ENCODE measurements at regions of chr1 and their contacts with region 1.

Region 1: GRCh38 chr1:119367427-119368124 is 1.0 kb upstream of the HAO2 start:
- DNase-seq: no peak
- H3K4me3 ChIP-seq: no peak overlapping the region
- H3K4me3 Mint-ChIP-seq: no peak overlapping the region
- H3K27ac ChIP-seq: no peak overlapping the region
- H3K27ac Mint-ChIP-seq: no peak overlapping the region
- H3K4me1 ChIP-seq: no peaks in the 10 kb centered on the region
- H3K4me1 Mint-ChIP-seq: no peaks in the 10 kb centered on the region
- H3K27me3 ChIP-seq: no peaks in the 10 kb centered on the region
- H3K27me3 Mint-ChIP-seq: peaks cover 10 to 15% of the 10 kb centered on the region in 2 donors

Region 2: GRCh38 chr1:118151312-118151937 is 1216.2 kb before region 1 on chr1:
- CTCF ChIA-PET with region 1: no interaction called
- POLR2A ChIA-PET with region 1: no interaction called
- intact Hi-C with region 1: loop called (anchors 2 kb)
- DNase-seq: peak in 1 of 5 donors; percentile 1
- H3K4me3 ChIP-seq: no peak overlapping the region
- H3K4me3 Mint-ChIP-seq: no peak overlapping the region
- H3K27ac ChIP-seq: no peak overlapping the region
- H3K27ac Mint-ChIP-seq: no peak overlapping the region
- H3K4me1 ChIP-seq: no peaks in the 10 kb centered on the region
- H3K4me1 Mint-ChIP-seq: no peaks in the 10 kb centered on the region
- H3K27me3 ChIP-seq: no peaks in the 10 kb centered on the region
- H3K27me3 Mint-ChIP-seq: no peaks in the 10 kb centered on the region

Region 3: DNA sequence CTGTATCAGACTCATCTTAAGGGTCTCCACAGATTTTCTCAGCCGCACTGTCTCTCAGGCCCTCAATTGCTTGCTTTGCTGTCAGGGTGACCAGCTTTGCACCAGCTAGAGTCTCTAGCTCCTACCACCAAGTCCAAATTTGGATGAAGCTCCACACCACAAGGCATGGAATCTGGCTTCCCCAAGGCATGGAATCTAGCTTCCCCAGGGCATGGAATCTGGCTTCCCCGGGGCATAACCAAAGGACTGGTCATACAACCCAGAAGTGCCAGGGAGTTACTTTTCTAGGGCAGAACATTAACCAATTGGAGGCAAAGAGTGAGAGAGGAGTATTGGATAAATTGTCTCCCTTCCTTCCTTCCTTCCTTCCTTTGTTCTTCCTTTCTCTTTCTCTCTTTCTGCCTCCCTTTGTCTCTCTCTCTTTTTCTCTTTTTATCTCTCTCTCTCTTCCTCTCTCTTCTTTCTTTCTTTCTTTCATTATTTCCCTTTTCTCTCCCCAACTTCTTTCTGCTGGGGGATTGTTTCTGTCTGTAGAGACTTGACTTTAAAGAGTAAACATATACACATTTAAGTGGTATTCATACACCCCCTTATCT is 75.9 kb before region 1 on chr1:
- CTCF ChIA-PET with region 1: no interaction called
- POLR2A ChIA-PET with region 1: no interaction called
- intact Hi-C with region 1: loop called (anchors 2 kb)
- DNase-seq: no peak
- H3K4me3 ChIP-seq: no peak overlapping the region
- H3K4me3 Mint-ChIP-seq: peak overlapping the region in 1 of 8 donors; percentile 71
- H3K27ac ChIP-seq: no peak overlapping the region
- H3K27ac Mint-ChIP-seq: no peak overlapping the region
- H3K4me1 ChIP-seq: peaks cover 11% of the 10 kb centered on the region
- H3K4me1 Mint-ChIP-seq: peaks cover 5 to 12% (median 7%) of the 10 kb centered on the region in 4 donors
- H3K27me3 ChIP-seq: no peaks in the 10 kb centered on the region
- H3K27me3 Mint-ChIP-seq: peaks cover 4 to 11% of the 10 kb centered on the region in 2 donors

Region 4: DNA sequence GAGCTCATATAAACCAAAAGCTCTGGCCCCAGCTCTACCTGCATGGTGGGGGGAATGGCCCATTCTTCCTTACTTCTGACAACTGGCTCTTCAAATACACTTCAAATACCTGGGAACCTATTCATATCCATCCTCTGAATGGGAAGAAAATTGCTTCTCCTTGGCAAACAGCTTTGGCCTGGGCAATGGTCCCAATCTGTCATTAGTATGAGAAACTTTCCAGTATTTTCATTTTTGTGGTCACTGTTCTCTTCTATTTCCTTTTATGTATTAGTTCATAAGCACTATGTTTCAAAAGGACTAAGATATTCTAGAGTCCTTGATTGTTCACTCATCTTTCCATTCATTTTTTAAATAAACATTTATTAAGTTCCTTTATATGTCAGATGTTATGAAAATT is 42.2 kb after region 1 on chr1:
- CTCF ChIA-PET with region 1: no interaction called
- POLR2A ChIA-PET with region 1: no interaction called
- intact Hi-C with region 1: no loop called
- DNase-seq: no peak
- H3K4me3 ChIP-seq: no peak overlapping the region
- H3K4me3 Mint-ChIP-seq: no peak overlapping the region
- H3K27ac ChIP-seq: no peak overlapping the region
- H3K27ac Mint-ChIP-seq: no peak overlapping the region
- H3K4me1 ChIP-seq: no peaks in the 10 kb centered on the region
- H3K4me1 Mint-ChIP-seq: no peaks in the 10 kb centered on the region
- H3K27me3 ChIP-seq: no peaks in the 10 kb centered on the region
- H3K27me3 Mint-ChIP-seq: peaks cover 0 to 5% of the 10 kb centered on the region in 2 donors